Heart left ventricle (tissue), 16 donors: ENCODE measurements at regions of chr14 and their contacts with region 1.

Region 1: DNA sequence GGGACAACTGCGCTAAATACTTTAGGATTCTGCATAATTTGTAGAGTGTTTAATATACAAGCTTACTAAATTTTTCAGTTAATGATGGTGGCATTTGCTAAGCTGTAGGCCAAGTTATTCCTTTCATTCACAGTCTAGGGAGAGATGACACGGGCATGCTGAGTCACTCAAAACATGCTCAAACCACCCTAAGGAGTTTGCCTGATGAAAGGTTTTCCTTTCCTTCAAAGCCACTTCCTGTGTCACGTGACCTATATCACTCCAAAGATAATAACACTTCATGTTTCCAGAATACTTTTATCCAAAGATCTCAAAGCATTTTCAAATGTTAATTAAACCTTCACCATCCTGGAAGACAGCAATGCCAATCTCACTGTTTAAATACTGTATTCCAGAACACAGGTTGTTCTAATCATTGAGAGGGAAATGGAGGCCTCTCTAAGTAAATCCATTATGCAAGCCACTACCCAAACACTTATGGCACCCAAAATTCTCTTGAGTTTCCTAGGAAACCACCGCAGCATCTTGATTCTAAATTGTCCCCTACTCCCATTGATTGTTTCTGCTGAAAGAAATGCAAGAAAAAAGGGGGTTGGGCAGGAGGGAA is 207.0 kb upstream of the CDKN3 start:
- DNase-seq: no peak
- ATAC-seq: peak in 1 of 4 donors; percentile 43
- H3K4me3 ChIP-seq: no peak overlapping the region
- H3K27ac ChIP-seq: no peak overlapping the region
- H3K4me1 ChIP-seq: peaks cover 0 to 10% (median 0%) of the 10 kb centered on the region in 12 donors
- H3K27me3 ChIP-seq: no peaks in the 10 kb centered on the region
- CTCF ChIP-seq: no peak
- POLR2A ChIP-seq: no peak

Region 2: DNA sequence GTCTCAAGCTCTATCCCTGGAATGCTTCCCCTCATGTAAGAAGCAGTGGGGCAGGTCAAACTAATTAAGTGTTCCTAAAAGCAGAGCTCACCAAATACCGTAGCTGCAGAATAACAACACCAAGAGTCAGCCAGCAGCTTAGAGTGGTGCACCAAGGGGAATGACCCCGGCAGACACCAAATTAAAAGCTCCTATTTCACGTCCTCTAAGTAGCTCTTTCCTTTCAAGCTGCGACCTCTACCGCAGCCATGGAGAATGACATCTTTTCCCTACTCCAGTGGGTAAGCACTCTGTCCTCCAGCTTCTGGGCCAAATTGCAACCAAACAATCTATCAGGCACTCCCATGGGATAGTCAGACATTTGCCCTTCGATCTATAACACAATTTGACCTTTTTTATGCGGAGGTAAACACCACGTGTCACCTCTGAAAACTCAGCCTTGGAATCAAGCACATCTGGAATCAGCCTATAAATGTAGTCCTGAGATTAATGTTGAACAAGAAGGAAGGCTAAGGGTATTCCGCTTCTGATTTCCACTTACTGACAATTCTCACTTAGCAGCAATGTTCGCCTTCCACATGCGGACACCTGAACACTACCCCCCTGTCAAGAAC is 139.3 kb after region 1 on chr14:
- intact Hi-C with region 1: loop called in 1 of 10 experiments (anchors 10 kb)
- DNase-seq: peak in 4 of 5 donors; percentile 30 to 49 (median 40)
- ATAC-seq: peak; percentile 62 to 84 (median 82)
- H3K4me3 ChIP-seq: no peak overlapping the region
- H3K27ac ChIP-seq: no peak overlapping the region
- H3K4me1 ChIP-seq: peaks cover 0 to 13% (median 0%) of the 10 kb centered on the region in 12 donors
- H3K27me3 ChIP-seq: no peaks in the 10 kb centered on the region
- CTCF ChIP-seq: peak; percentile 41 to 79 (median 59)
- POLR2A ChIP-seq: no peak